ENCODE measurements at regions of chr21 and their contacts with region 1.

Region 1: GRCh38 chr21:44267655-44268142 is 6.0 kb upstream of the DNMT3L start:
- DNase-seq: peak in 1 of 2 experiments; percentile 37
- H3K4me3 ChIP-seq: no peak overlapping the region
- H3K4me3 Mint-ChIP-seq: no peak overlapping the region
- H3K27ac Mint-ChIP-seq: no peak overlapping the region
- H3K4me1 ChIP-seq: no peaks in the 10 kb centered on the region
- H3K4me1 Mint-ChIP-seq: no peaks in the 10 kb centered on the region
- H3K27me3 ChIP-seq: no peaks in the 10 kb centered on the region
- H3K27me3 Mint-ChIP-seq: no peaks in the 10 kb centered on the region
- CTCF ChIP-seq: peak in 1 of 2 experiments; percentile 34

Region 2: DNA sequence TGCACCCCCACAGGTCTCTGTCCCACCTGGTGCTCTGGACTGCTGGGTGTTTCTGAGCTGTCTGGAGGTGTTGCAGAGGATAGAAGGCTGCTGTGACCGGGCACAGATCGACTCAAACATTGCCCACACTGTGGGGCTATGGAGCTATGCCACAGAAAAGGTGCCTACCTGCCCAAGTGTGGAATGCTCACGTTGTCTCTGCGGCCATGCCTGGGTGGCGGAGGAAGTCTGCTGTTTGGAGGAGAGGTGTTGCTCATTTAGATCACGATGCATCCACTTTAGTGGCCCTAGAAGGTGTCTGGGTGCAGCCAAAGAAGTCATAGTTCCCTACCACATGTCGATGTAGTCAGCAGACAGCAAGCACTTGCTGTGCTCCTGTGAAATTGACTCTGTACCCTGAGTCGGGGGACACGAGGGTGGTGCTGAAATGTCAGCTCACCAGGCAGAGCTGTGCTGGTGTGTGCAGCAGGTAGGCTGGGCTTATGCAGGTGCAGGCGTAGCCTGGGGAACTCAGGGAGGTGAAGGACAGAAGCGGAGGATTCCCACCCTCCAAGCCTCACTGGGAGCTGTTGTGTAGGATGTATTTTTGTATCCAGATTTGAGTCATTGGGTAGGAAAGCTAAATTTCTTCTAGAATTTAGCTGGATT is 193.3 kb before region 1 on chr21:
- CTCF ChIA-PET with region 1: no interaction called
- POLR2A ChIA-PET with region 1: no interaction called
- intact Hi-C with region 1: no loop called
- DNase-seq: no peak
- H3K4me3 ChIP-seq: no peak overlapping the region
- H3K4me3 Mint-ChIP-seq: no peak overlapping the region
- H3K27ac Mint-ChIP-seq: no peak overlapping the region
- H3K4me1 ChIP-seq: no peaks in the 10 kb centered on the region
- H3K4me1 Mint-ChIP-seq: no peaks in the 10 kb centered on the region
- H3K27me3 ChIP-seq: no peaks in the 10 kb centered on the region
- H3K27me3 Mint-ChIP-seq: no peaks in the 10 kb centered on the region
- CTCF ChIP-seq: no peak

Region 3: GRCh38 chr21:44297525-44298290 is 30.0 kb after region 1 on chr21:
- CTCF ChIA-PET with region 1: interaction called, 10 read pairs
- POLR2A ChIA-PET with region 1: no interaction called
- intact Hi-C with region 1: no loop called
- DNase-seq: peak; percentile 84 to 87
- H3K4me3 ChIP-seq: no peak overlapping the region
- H3K4me3 Mint-ChIP-seq: no peak overlapping the region
- H3K27ac Mint-ChIP-seq: no peak overlapping the region
- H3K4me1 ChIP-seq: peaks cover 20% of the 10 kb centered on the region
- H3K4me1 Mint-ChIP-seq: no peaks in the 10 kb centered on the region
- H3K27me3 ChIP-seq: no peaks in the 10 kb centered on the region
- H3K27me3 Mint-ChIP-seq: no peaks in the 10 kb centered on the region
- CTCF ChIP-seq: peak; percentile 72 to 81

Measured in Caco-2 (cell line).